HEK293 (cell line): ENCODE measurements at regions of chr18 and their contacts with region 1.

Region 1: GRCh38 chr18:22108674-22109073 is 60.7 kb upstream of the GATA6 start:
- H3K4me3 ChIP-seq: no peak overlapping the region
- H3K27ac ChIP-seq: no peak overlapping the region
- H3K4me1 ChIP-seq: peaks cover 6% of the 10 kb centered on the region
- CTCF ChIP-seq: peak; percentile 45

Region 2: GRCh38 chr18:21727702-21728101 is 381.0 kb before region 1 on chr18:
- CTCF ChIA-PET with region 1: no interaction called
- POLR2A ChIA-PET with region 1: no interaction called
- H3K4me3 ChIP-seq: no peak overlapping the region
- H3K27ac ChIP-seq: no peak overlapping the region
- H3K4me1 ChIP-seq: no peaks in the 10 kb centered on the region
- CTCF ChIP-seq: no peak

Region 3: GRCh38 chr18:22124970-22125369 is 16.3 kb after region 1 on chr18:
- CTCF ChIA-PET with region 1: interaction called, 10 read pairs
- POLR2A ChIA-PET with region 1: no interaction called
- H3K4me3 ChIP-seq: no peak overlapping the region
- H3K27ac ChIP-seq: no peak overlapping the region
- H3K4me1 ChIP-seq: no peaks in the 10 kb centered on the region
- CTCF ChIP-seq: no peak

Region 4: GRCh38 chr18:22169007-22169864 is 60.6 kb after region 1 on chr18 and contains the start of gene GATA6:
- CTCF ChIA-PET with region 1: interaction called, 6 read pairs
- POLR2A ChIA-PET with region 1: interaction called, 11 read pairs
- H3K4me3 ChIP-seq: peak within 1 kb of the TSS; percentile 96
- H3K27ac ChIP-seq: peak within 1 kb of the TSS; percentile 100
- H3K4me1 ChIP-seq: peaks cover under 1% of the 10 kb centered on the region
- CTCF ChIP-seq: peak; percentile 90

Region 5: DNA sequence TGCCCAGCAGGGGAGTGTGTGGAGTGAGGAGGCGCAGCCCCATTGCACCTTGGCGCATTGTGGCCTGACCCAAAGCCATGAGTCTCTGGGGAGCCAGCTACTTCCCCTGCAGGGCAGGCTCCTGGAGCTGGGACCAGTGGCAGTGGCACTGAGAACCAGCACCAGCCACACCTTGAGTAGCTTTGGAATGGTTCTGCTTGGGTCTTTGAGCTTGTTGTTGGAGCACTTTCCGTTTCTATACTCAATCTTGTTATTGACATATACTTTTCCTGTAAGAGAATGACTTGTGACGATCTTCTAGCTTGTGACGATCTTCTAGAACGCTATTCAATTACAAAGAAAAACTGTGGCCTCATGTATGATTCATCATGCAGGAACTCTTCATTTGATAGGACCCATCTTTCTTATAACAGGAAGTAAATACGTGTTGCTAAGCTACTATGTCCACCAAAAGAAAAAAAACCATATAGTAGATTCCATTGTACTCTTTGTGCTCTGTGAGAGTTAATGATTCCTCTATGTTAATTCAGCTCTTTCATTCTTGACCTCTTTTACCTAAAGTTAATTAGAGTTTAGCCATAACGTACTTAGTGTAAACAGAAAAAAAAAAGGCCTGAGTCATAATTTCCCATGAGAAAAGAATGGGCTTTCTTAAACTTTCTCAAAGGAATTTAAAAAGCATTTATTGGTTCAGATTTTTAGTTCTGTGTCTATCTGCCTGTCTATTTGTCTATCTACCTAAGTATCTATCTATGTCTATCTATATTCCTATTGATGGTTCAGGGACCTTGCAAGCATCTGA is 173.8 kb after region 1 on chr18:
- CTCF ChIA-PET with region 1: no interaction called
- POLR2A ChIA-PET with region 1: no interaction called
- H3K4me3 ChIP-seq: no peak overlapping the region
- H3K27ac ChIP-seq: no peak overlapping the region; the same call in 1 of the 2 replicates
- H3K4me1 ChIP-seq: peaks cover 2% of the 10 kb centered on the region; the same call in 1 of the 2 replicates
- CTCF ChIP-seq: no peak